Gastrocnemius medialis (tissue), 4 donors: ENCODE measurements at regions of chr21 and their contacts with region 1.

Region 1: GRCh38 chr21:37430184-37430821 is 63.7 kb downstream of the DYRK1A start:
- DNase-seq: peak; percentile 24 to 63
- ATAC-seq: peak; percentile 59 to 84
- H3K4me3 ChIP-seq: peak overlapping the region in 2 of 4 donors; percentile 1 to 3
- H3K27ac ChIP-seq: peak overlapping the region; percentile 79 to 83 (median 82)
- H3K4me1 ChIP-seq: peaks cover 76% of the 10 kb centered on the region in 2 donors
- H3K27me3 ChIP-seq: no peaks in the 10 kb centered on the region
- CTCF ChIP-seq: no peak
- POLR2A ChIP-seq: no peak

Region 2: DNA sequence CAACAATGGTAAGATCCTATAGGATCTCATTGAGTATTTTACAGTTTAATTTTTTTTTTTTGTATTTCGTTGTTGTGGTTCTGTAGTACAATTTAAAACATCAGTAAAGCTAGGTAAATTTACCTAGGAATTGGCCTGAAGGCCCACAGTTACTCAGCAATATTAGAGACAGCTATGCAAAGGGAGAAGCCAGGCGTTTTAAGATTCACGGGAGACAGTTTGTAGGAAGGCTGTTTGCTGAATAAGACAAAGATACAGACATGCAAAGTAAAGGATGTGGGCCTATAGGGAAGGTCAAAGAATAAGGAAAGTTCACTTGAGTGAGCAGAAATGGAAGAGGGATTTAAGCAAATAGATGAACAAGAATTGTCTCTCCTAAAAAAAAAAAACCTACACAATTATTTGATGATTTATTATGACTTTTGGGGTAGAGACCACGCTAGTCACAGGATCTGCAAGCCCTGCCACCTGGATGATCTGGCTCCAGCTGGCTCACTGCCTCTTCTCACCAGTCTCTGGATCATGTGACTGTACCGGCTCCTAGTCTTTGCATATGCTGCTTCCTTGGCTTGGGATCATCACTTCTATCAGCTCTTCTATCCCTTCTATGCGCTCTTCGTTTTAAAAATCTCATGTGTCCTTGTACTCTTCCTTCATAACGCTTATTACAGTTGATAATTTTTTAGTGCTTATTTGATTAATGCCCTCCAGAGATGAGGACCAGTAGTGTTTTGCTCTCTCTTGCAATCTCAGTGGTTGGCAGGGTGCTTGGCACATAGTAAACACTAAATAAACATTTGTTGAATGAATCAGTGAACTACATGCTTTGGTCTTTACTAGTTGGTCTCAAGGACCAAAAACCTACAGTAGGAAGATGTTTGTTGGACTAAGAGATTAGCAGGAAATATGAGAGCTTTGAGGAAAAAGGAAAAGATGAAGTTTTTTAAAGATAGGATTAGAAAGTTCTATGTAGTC is 49.7 kb before region 1 on chr21:
- in situ Hi-C with region 1: no loop called
- intact Hi-C with region 1: loop called (anchors 2 kb)
- DNase-seq: peak in 1 of 2 donors; percentile 63
- ATAC-seq: peak; percentile 41 to 69
- H3K4me3 ChIP-seq: no peak overlapping the region
- H3K27ac ChIP-seq: peak overlapping the region; percentile 54 to 76 (median 66)
- H3K4me1 ChIP-seq: peaks cover 86 to 97% of the 10 kb centered on the region in 2 donors
- H3K27me3 ChIP-seq: no peaks in the 10 kb centered on the region
- CTCF ChIP-seq: no peak
- POLR2A ChIP-seq: no peak